Body of pancreas (tissue), 4 donors: ENCODE measurements at regions of chr3 and their contacts with region 1.

Region 1: DNA sequence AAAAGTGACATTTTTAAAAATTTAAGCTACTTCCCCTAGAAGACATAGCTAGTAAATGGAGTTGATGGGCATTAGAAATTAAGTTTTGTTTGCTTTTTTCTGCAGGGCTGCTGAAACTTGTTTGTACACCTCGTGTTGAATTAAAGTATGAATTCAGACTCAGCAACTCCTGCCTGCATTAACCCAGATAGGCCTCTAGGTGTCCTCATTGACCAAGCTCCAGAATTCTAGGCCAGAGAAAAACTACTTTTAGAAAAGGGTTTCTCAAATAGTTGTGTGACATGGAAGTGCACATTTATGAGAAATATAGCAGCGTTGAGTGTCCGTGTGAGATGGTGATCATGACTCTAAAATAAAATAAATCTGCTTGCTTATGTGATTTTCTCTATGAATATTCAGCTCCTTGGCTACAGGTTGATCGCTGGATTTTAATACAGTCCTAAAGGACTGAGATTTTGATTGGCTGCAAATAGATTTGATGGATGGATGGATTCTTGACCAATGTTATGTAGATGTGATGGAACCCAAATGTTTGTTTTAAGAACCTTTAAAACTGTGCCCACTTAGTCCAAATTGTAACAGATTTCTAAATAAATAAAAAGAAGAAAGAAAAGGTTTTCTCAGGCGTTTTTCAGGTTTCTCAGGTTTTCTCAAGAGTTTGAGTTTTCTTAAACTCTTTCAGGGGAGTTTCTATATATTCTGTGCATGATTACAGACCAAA is 39.4 kb upstream of the LMOD3 start:
- DNase-seq: peak; percentile 23 to 51 (median 39)
- ATAC-seq: peak; percentile 72
- H3K4me3 ChIP-seq: no peak overlapping the region
- H3K27ac ChIP-seq: no peak overlapping the region
- H3K4me1 ChIP-seq: no peaks in the 10 kb centered on the region
- H3K27me3 ChIP-seq: no peaks in the 10 kb centered on the region
- CTCF ChIP-seq: peak; percentile 71 to 97 (median 94)
- POLR2A ChIP-seq: no peak

Region 2: DNA sequence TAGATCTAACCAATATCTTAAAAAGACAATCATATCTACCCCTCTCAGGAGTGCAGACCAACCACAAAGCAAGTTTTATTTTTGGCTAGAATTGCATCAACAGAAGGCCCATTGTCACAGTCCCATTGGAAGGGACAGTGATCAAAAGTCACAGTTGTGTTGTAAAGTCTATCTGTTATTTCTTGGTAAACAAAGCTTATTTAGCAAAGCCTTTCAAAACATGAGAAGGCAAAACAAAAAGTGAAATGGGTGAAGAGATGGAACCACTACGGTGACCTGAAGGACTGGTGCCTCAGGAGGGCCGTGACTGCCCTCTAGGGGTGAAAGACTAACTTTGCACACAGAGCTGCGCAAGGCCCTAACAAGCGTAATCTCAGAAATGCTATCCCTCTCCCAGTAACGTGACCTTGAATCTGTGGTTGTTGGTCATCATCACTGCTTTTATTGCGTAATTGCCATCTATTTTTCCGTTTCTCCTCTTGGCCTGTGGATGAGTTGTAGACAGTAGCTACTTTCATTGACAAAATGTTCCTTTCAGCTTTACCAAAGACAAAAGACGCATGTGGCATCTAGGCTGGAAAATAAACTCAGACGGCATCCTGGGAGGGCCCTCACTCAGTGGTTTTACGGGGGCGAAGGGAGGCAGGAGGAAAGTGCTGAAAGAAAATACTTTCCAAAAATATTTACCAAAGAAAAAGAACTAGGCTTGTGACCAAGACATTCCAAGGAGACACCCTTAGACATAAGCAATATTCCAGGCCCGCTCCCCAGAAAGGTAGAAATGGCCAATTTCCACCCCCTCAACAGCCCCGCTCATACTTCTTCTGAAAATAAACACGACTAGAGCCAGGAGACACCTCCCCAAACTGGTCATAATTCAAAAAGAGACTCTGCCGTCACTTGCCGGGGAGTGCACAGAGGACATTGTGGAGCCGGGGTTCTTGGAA is 144.8 kb after region 1 on chr3:
- intact Hi-C with region 1: loop called (anchors 5 kb)
- DNase-seq: peak; percentile 59 to 78 (median 70)
- ATAC-seq: peak; percentile 95
- H3K4me3 ChIP-seq: no peak overlapping the region
- H3K27ac ChIP-seq: no peak overlapping the region
- H3K4me1 ChIP-seq: peaks cover 4% of the 10 kb centered on the region
- H3K27me3 ChIP-seq: no peaks in the 10 kb centered on the region
- CTCF ChIP-seq: peak; percentile 84 to 92 (median 88)
- POLR2A ChIP-seq: no peak

Region 3: DNA sequence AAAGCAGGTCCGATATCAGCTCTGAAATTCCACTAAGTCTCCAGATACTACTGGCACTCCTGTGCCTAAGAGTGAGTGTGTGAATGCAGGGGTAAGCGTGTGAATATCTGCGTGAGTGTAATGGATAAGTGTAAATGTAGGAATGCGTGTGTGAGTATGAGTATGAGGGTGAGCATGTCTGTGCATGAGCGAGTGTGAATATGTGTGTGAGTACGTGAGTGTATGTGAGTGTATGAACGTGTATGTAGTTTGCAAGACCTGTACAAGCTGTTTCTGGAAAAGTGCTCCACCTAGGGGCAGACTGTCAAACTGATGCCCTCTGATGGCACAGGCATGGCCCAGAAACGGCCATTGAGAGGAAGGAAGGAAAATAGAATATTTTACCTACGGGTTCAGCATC is 248.5 kb after region 1 on chr3:
- intact Hi-C with region 1: loop called (anchors 10 kb)
- DNase-seq: peak; percentile 68 to 76 (median 72)
- ATAC-seq: peak; percentile 80
- H3K4me3 ChIP-seq: no peak overlapping the region
- H3K27ac ChIP-seq: no peak overlapping the region
- H3K4me1 ChIP-seq: no peaks in the 10 kb centered on the region
- H3K27me3 ChIP-seq: no peaks in the 10 kb centered on the region
- CTCF ChIP-seq: peak; percentile 36 to 85 (median 76)
- POLR2A ChIP-seq: no peak

Region 4: GRCh38 chr3:69671082-69671952 is 509.6 kb after region 1 on chr3:
- intact Hi-C with region 1: loop called (anchors 10 kb)
- DNase-seq: peak in 3 of 4 donors; percentile 16 to 51 (median 26)
- ATAC-seq: no peak
- H3K4me3 ChIP-seq: no peak overlapping the region
- H3K27ac ChIP-seq: no peak overlapping the region
- H3K4me1 ChIP-seq: peaks cover 7% of the 10 kb centered on the region
- H3K27me3 ChIP-seq: no peaks in the 10 kb centered on the region
- CTCF ChIP-seq: peak; percentile 47 to 71 (median 69)
- POLR2A ChIP-seq: no peak